ENCODE measurements at regions of chr12 and their contacts with region 1.

Region 1: DNA sequence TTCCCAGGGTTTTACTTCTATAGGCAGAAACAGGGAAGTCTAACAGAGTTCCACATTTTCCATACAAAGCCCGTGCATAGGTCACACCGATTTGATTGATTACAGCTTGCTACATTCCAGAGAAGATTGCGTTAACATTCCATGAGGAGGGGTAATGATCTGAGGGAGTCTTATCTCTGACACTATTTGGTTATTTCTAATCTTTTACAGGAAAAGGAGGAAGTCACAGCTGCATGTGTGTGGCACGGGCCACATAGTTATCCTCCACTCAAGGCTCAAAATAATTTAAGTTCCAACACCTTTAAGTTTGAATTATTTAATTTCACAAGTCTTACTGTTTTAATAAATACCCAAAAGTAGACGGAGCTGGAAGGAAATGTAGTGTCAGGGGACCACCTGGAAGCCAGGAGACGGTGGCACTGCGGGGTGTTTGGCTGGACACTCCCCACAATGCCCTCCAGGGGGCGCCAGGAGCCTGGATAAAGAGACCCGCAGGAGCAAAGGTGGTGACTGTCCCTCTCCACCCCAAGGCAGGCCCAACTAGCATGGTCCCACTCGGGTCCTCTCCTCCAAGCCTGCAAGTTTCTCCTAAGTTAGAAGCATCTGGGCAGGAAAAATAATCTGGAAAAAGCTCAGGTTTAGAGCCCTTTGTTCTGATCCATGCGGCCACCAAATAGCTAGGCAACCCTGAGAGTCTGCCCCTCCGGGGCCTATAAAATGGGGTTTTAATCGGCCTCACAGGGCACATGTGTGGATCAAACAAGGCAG is 20.2 kb downstream of the KRT8 start:
- DNase-seq: peak; percentile 86
- H3K4me3 ChIP-seq: no peak overlapping the region; a peak in 1 of 4 replicates
- H3K27ac ChIP-seq: no peak overlapping the region
- H3K4me1 ChIP-seq: no peaks in the 10 kb centered on the region; a peak in 1 of 4 replicates
- H3K27me3 ChIP-seq: no peaks in the 10 kb centered on the region
- CTCF ChIP-seq: peak; percentile 98
- EP300 ChIP-seq: no peak
- RAD21 ChIP-seq: peak; percentile 93

Region 2: DNA sequence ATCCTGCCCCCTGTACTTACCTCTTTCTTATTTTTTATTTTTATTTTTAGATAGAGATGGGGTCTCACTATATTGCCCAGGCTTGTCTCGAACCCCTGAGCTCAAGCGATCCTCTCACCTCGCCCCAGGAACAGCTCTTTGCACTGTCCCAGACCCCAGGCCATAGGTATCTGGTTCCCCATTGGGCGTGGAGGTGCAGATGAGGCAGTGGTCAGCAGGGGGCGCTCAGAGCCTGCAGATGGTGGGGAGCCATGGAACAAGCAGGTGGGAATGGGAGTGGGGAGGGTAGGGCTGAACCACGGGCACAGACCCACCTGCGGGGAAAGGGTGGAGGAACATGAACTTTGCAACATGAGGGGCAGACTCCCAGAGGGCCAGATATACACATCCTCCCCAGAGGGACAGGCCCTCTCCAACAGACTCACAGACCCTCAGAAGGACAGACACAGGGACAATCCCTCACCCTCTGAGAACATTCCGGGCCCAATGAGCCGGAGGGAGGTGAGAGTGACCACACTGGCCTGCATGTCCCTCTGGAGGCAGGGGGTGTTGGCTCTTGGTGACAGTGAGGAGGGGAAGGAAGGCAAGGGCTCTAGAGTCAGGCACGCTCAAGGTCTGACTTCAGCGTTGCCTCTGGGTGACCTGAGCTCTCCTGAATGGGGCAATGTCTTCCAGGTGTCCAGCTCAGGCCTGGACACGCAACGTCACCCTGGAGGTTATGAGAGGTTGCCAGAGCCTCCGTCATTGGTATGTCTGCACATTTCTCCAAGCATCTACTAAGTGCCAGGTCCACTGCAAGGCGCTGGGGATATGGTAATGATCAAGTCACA is 727.8 kb before region 1 on chr12:
- CTCF ChIA-PET with region 1: interaction called, 27 read pairs
- POLR2A ChIA-PET with region 1: no interaction called
- DNase-seq: peak; percentile 92
- H3K4me3 ChIP-seq: no peak overlapping the region; a peak in 1 of 4 replicates
- H3K27ac ChIP-seq: no peak overlapping the region
- H3K4me1 ChIP-seq: no peaks in the 10 kb centered on the region
- H3K27me3 ChIP-seq: no peaks in the 10 kb centered on the region
- CTCF ChIP-seq: peak; percentile 98
- EP300 ChIP-seq: no peak
- RAD21 ChIP-seq: peak; percentile 99

Region 3: DNA sequence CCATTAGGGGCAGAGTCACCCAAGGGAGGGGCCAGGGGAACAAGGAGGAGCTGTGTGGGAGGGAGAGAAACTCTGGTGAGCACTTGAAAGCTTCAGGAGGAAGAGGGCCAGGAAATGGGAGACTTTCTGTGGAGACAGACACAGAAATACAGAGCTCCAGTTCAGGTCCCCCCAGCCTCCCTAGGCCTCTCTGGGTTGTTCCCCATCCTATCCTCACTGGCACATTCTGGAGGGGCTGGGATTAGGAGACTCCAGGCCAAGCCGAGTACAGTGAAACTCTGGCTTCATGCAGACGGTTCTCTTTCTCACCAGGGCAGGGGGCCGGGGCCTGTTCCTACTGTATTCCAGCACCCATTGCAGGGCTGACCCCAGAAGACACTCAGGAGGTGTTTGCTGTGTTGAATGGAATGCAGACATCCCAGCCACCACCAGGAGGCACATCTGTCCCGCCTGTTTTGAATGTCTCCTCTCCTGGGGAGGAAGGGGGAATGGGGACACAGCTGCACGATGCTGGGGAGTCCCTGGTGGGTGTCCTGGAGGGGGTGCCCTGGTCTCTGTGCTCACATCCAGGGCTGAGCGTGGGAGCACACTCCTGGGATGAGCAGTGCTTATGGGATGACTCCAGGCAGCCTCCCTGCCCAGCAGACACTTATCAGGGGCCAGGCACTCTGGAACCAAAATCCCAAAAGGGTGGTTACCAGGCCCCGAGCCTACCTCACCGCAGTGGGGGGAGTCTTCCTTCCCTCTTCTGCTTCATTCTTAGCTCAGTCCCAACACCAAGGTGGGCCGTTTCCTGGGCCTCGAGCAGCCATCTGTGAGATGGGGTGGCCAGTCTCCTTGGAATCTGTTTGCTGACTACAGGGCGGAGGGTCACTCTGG is 493.7 kb before region 1 on chr12:
- CTCF ChIA-PET with region 1: interaction called, 14 read pairs
- POLR2A ChIA-PET with region 1: no interaction called
- DNase-seq: peak; percentile 44
- H3K4me3 ChIP-seq: no peak overlapping the region
- H3K27ac ChIP-seq: no peak overlapping the region
- H3K4me1 ChIP-seq: peaks cover 0 to 7% of the 10 kb centered on the region in 2 experiments; a peak in 1 of 4 replicates
- H3K27me3 ChIP-seq: peaks cover 46% of the 10 kb centered on the region; the same call in 1 of the 2 replicates
- CTCF ChIP-seq: peak; percentile 62
- EP300 ChIP-seq: no peak
- RAD21 ChIP-seq: peak; percentile 44

Region 4: GRCh38 chr12:52870351-52871290 is 14.1 kb before region 1 on chr12:
- CTCF ChIA-PET with region 1: interaction called, 34 read pairs
- POLR2A ChIA-PET with region 1: no interaction called
- DNase-seq: peak; percentile 84
- H3K4me3 ChIP-seq: no peak overlapping the region; a peak in 1 of 4 replicates
- H3K27ac ChIP-seq: peak overlapping the region in 1 of 2 experiments; percentile 69; a peak in 2 of 4 replicates
- H3K4me1 ChIP-seq: peaks cover 10 to 18% of the 10 kb centered on the region in 2 experiments; a peak in 3 of 4 replicates
- H3K27me3 ChIP-seq: no peaks in the 10 kb centered on the region
- CTCF ChIP-seq: peak; percentile 85
- EP300 ChIP-seq: no peak
- RAD21 ChIP-seq: peak; percentile 71

Region 5: DNA sequence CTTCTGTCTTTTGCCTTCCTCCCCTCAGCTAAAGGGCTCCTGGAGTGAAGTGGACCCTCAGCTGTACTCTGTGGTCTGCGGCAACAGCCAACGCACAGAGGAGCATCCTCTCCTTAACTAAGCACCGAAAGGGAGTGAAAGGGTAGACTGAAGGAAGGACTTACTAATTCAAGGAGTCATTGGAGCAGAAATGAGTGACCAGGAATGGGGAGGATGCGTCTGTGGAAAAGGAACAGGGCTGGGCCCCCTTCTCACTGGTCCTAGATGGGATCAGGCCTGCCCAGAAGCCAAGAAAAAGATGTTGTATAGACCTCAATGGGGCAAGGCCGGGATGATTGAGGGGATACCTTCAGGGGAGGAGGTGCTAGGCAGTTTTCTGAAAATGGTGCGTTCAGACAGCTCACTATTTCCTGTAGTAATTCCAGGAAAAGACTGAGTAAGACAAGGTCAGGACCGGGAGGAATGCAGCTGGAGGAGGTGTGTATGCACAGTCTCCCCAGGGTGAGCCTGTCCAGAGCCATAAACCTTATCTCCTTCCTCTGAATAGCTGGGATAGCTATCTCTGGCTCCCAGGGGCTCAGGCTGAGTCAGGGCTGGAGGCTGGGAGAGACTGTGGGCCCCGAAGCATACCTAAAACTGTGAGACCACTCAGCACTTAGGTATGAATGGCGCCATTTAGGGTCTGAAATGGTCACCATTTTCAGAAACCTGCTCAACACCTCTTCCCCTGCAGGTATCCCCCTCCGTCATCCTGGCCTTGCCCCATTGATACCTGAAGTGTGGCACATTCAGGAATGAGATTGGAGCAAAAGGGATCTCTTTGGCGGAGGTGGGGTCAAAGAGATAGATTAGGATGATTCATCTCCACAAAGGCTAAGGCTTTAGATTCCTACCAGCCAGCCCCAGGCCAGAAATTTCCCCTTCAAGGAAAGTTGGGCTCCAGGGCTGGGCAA is 40.3 kb after region 1 on chr12:
- CTCF ChIA-PET with region 1: interaction called, 10 read pairs
- POLR2A ChIA-PET with region 1: interaction called, 3 read pairs
- DNase-seq: no peak
- H3K4me3 ChIP-seq: no peak overlapping the region; a peak in 1 of 4 replicates
- H3K27ac ChIP-seq: peak overlapping the region; percentile 70 to 97; a peak in 3 of 4 replicates
- H3K4me1 ChIP-seq: peaks cover 4 to 35% of the 10 kb centered on the region in 2 experiments; a peak in 3 of 4 replicates
- H3K27me3 ChIP-seq: no peaks in the 10 kb centered on the region
- CTCF ChIP-seq: no peak
- EP300 ChIP-seq: peak; percentile 18 to 94; a peak in 1 of 4 replicates
- RAD21 ChIP-seq: no peak

Region 6: GRCh38 chr12:52956987-52957386 is 72.3 kb after region 1 on chr12:
- CTCF ChIA-PET with region 1: interaction called, 16 read pairs
- POLR2A ChIA-PET with region 1: no interaction called
- DNase-seq: no peak
- H3K4me3 ChIP-seq: no peak overlapping the region
- H3K27ac ChIP-seq: no peak overlapping the region
- H3K4me1 ChIP-seq: no peaks in the 10 kb centered on the region
- H3K27me3 ChIP-seq: no peaks in the 10 kb centered on the region
- CTCF ChIP-seq: no peak
- EP300 ChIP-seq: no peak
- RAD21 ChIP-seq: no peak

Region 7: GRCh38 chr12:52992699-52993557 is 108.2 kb after region 1 on chr12:
- CTCF ChIA-PET with region 1: interaction called, 485 read pairs
- POLR2A ChIA-PET with region 1: no interaction called
- DNase-seq: no peak
- H3K4me3 ChIP-seq: no peak overlapping the region
- H3K27ac ChIP-seq: no peak overlapping the region
- H3K4me1 ChIP-seq: no peaks in the 10 kb centered on the region
- H3K27me3 ChIP-seq: no peaks in the 10 kb centered on the region
- CTCF ChIP-seq: no peak
- EP300 ChIP-seq: no peak
- RAD21 ChIP-seq: no peak

Measured in SK-N-SH (cell line).